Kidney (tissue), 22 donors: ENCODE measurements at regions of chr19 and their contacts with region 1.

Region 1: GRCh38 chr19:19531951-19532805 is 3.5 kb downstream of the YJEFN3 start:
- DNase-seq: peak; percentile 68 to 92 (median 86)
- H3K4me3 ChIP-seq: no peak overlapping the region
- H3K27ac ChIP-seq: no peak overlapping the region
- H3K4me1 ChIP-seq: peaks cover 0 to 2% (median 0%) of the 10 kb centered on the region in 3 donors
- H3K27me3 ChIP-seq: no peaks in the 10 kb centered on the region
- CTCF ChIP-seq: peak; percentile 96

Region 2: GRCh38 chr19:19224852-19225494 is 307.2 kb before region 1 on chr19:
- intact Hi-C with region 1: no loop called
- DNase-seq: peak; percentile 66 to 84 (median 72)
- H3K4me3 ChIP-seq: peak overlapping the region in 1 of 3 donors; percentile 39
- H3K27ac ChIP-seq: no peak overlapping the region
- H3K4me1 ChIP-seq: peaks cover 0 to 4% (median 0%) of the 10 kb centered on the region in 3 donors
- H3K27me3 ChIP-seq: no peaks in the 10 kb centered on the region
- CTCF ChIP-seq: peak; percentile 52

Region 3: GRCh38 chr19:19643158-19644053 is 111.2 kb after region 1 on chr19 and contains the start of gene GMIP:
- intact Hi-C with region 1: loop called (anchors 5 kb)
- DNase-seq: peak; percentile 70 to 91 (median 82)
- H3K4me3 ChIP-seq: peak within 1 kb of the TSS; percentile 56 to 78 (median 62)
- H3K27ac ChIP-seq: no peak within 1 kb of the TSS
- H3K4me1 ChIP-seq: peaks cover 0 to 5% (median 0%) of the 10 kb centered on the region in 3 donors
- H3K27me3 ChIP-seq: no peaks in the 10 kb centered on the region
- CTCF ChIP-seq: peak; percentile 73
- total RNA-seq, gene GMIP: 18.8 TPM

Region 4: GRCh38 chr19:19966862-19967261 is 434.7 kb after region 1 on chr19:
- intact Hi-C with region 1: loop called (anchors 10 kb)
- DNase-seq: no peak
- H3K4me3 ChIP-seq: no peak overlapping the region
- H3K27ac ChIP-seq: no peak overlapping the region
- H3K4me1 ChIP-seq: no peaks in the 10 kb centered on the region
- H3K27me3 ChIP-seq: no peaks in the 10 kb centered on the region
- CTCF ChIP-seq: no peak